AG04450 (cell line): ENCODE measurements at regions of chr9 and their contacts with region 1.

Region 1: GRCh38 chr9:130701056-130702022 is 7.8 kb downstream of the EXOSC2 start:
- DNase-seq: peak; percentile 81
- H3K4me3 ChIP-seq: no peak overlapping the region
- H3K27ac ChIP-seq: no peak overlapping the region
- H3K27me3 ChIP-seq: no peaks in the 10 kb centered on the region
- CTCF ChIP-seq: peak; percentile 99

Region 2: DNA sequence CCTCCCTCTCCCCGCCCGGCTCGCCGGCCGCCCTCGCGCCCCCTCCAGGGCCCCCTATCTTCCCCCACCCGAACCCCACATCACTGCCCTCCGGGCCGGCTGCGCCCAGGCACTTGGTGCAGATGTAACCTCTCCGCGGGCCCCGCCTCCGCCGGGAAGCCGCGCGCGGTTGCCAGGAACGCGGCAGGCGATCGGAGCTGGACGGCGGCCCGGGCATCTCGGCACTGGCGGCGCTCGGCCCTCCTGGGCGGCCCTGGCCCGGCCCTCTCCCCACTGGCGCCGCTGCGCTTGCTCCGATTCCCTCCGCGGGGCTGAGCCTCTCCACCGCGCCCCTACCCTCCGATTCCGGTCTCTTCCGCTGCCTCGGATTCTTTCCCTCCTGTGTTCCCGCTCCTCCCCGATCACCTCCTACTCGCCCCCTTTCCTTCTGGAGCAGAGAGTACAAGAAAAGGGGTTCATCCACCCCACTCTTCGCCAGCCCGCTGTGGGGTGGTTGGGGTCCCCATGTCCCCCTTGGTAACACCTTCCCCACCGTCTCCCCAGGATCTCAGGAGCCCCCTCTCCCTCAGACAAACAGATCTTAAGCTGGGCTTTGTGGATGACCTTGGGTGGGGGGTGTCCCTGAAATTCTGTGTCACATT is 1151.0 kb before region 1 on chr9:
- CTCF ChIA-PET with region 1: no interaction called
- POLR2A ChIA-PET with region 1: no interaction called
- DNase-seq: no peak
- H3K4me3 ChIP-seq: peak overlapping the region; percentile 55
- H3K27ac ChIP-seq: peak overlapping the region; percentile 57
- H3K27me3 ChIP-seq: no peaks in the 10 kb centered on the region
- CTCF ChIP-seq: no peak

Region 3: DNA sequence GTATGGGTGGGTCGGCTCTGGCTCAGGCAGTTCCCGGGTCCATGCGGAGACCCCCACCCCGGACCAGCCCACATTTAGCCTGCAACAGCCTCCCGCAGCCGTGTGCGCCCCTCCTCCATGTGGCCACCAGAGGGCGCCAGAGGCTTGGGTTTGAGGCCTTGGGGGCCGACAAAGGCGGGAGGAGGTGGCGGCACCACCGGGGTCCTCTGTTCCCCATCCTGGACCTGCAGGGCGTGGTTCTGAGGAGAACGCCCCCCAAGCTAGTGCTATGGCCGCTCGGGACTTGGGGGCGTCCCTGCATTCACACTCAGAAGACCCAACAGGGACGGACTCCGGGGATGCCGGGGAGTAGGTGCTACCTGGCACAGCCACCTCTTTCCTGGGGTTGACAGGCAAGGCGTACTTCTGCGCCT is 240.1 kb before region 1 on chr9:
- CTCF ChIA-PET with region 1: interaction called, 10 read pairs
- POLR2A ChIA-PET with region 1: no interaction called
- DNase-seq: no peak
- H3K4me3 ChIP-seq: no peak overlapping the region
- H3K27ac ChIP-seq: no peak overlapping the region
- H3K27me3 ChIP-seq: peaks cover 9% of the 10 kb centered on the region
- CTCF ChIP-seq: peak; percentile 85

Region 4: DNA sequence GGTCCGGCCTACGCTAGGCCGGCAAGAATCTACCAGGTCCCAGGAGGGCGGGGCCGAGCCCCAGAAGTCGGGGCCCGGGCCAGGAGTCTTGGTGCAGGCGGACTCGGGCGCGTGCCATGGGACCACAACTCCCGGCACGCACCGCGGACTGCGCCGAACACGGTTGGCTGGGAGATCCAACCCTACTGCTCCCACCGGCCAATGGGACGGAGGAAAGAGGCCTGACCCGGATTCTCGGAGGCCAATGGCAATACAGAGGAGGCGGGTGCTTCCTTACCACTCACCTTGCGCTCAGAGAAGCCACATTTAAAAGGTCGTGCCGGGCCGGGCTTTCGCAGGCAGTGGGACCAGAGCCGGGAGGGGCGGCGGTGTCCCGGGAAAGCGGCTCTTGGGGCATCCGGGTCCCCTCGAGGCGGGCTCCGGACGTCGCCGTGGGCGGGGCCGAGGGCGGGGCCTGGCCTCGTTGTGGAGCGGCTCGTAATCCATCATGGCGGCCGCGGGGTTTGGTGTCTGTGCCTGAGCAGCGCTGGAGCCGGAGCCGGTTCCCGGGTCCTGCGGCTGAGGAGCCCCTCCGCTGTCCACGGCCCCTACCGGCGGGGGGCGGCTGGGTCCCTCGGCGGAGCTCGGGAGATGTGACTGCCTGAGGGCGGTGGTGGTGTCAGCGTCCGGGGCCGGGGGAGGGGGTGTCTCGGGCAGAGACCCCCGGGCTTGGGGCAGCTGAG is 11.4 kb after region 1 on chr9:
- CTCF ChIA-PET with region 1: interaction called, 20 read pairs
- POLR2A ChIA-PET with region 1: no interaction called
- DNase-seq: peak; percentile 97
- H3K4me3 ChIP-seq: peak overlapping the region; percentile 78
- H3K27ac ChIP-seq: peak overlapping the region; percentile 96
- H3K27me3 ChIP-seq: no peaks in the 10 kb centered on the region
- CTCF ChIP-seq: no peak

Region 5: DNA sequence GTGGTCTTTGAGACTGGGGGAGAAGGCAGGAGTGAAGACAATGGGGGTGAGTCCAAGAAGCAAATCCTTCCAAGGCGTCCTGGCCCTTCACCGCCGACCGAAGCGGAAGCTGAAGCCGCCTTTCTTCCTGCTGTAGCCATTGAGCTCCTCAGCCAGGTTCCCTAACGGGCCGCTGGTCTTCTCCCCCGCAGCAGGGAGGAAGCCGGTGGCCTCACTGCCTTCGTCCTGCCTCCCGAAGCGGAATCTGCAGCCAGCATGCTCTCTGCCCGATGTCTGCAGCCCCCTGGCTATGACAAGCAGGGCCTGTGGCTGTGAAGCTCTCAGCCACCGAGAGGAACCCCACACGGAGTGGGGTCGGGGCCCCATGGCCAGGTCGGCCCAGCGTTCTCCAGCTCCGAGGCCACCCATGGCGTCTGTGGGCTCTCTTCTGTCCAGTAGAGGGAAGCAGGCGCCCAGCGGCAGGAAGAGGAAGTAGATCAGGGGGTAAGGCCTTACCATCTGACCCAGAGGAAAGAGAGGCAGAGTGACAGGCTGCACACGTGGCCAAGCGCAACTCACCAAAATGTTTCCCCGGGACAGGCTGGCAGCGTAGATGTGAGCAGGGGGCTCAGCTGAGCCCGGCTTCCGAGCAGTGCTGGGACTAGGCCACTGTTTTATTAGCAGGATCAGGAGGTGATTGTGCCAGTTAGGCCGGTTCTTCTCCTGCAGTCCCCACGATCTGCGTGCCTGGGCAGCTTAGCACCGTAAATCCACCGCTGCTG is 192.2 kb after region 1 on chr9:
- CTCF ChIA-PET with region 1: interaction called, 11 read pairs
- POLR2A ChIA-PET with region 1: no interaction called
- DNase-seq: no peak
- H3K4me3 ChIP-seq: no peak overlapping the region
- H3K27ac ChIP-seq: peak overlapping the region; percentile 31
- H3K27me3 ChIP-seq: no peaks in the 10 kb centered on the region
- CTCF ChIP-seq: peak; percentile 38

Region 6: GRCh38 chr9:130997925-130998596 is 296.7 kb after region 1 on chr9:
- CTCF ChIA-PET with region 1: interaction called, 56 read pairs
- POLR2A ChIA-PET with region 1: no interaction called
- DNase-seq: peak; percentile 18
- H3K4me3 ChIP-seq: no peak overlapping the region
- H3K27ac ChIP-seq: no peak overlapping the region
- H3K27me3 ChIP-seq: peaks cover 24% of the 10 kb centered on the region
- CTCF ChIP-seq: peak; percentile 78

Region 7: DNA sequence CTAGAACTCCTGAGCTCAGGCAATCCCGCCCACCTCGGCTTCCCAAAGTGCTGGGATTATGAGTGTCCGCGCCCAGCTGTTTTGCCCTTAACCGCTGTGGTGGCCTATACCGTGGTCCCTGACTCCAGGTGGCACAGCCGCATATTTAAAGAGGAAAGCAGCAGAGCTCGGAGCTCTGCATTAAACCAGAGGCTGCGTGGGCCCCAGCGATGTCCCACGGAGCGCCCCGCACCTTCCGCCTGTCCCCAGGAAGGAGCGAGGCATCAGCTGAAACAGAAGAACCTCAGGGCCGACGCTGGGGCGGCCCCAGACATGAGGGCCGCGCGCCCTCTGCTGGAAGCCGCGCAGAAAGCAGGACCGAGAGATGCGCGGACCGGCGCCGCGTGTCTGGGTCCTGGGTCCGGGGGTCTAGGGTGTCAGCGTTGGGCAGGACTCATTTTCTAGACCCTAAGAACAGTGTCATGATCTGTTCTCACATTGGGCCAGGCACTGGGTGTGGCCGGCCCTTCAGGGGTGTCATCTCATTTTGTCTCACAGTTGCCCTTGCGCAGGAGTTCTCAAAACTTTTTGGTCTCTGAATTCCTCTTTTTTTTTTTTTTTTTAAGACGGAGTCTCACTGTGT is 345.4 kb after region 1 on chr9:
- CTCF ChIA-PET with region 1: interaction called, 34 read pairs
- POLR2A ChIA-PET with region 1: no interaction called
- DNase-seq: peak; percentile 13
- H3K4me3 ChIP-seq: no peak overlapping the region
- H3K27ac ChIP-seq: no peak overlapping the region
- H3K27me3 ChIP-seq: peaks cover 14% of the 10 kb centered on the region
- CTCF ChIP-seq: peak; percentile 95